PC-3 (cell line): ENCODE measurements at regions of chr5 and their contacts with region 1.

Region 1: GRCh38 chr5:159286420-159287035 is 23.4 kb downstream of the UBLCP1 start:
- DNase-seq: peak; percentile 49
- ATAC-seq: no peak
- H3K4me3 ChIP-seq: no peak overlapping the region
- H3K27ac ChIP-seq: no peak overlapping the region
- H3K4me1 ChIP-seq: 0 out of 2 replicates have a peak, but pooled peaks cover 6% of the 10 kb centered on the region
- H3K27me3 ChIP-seq: no peaks in the 10 kb centered on the region
- CTCF ChIP-seq: peak; percentile 64

Region 2: DNA sequence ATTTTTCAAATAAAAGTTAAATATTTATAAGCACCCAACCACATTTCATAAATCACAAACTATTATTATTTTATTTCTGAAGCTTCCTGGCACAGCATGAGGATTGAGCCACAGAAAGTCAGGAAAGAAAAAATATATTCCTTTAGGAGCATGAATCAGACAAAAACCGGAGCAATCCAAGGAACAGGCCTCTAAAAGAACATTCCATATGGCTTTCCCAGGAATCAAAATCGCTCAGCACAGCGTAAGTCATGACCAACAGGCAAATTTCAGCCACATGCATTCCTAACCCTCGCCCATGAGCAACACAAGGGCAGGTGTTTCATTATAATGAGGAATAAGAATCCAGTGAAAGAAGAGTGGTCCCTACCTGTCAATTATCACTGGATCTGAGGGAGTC is 213.5 kb before region 1 on chr5:
- CTCF ChIA-PET with region 1: no interaction called
- POLR2A ChIA-PET with region 1: no interaction called
- intact Hi-C with region 1: no loop called
- DNase-seq: no peak
- ATAC-seq: no peak
- H3K4me3 ChIP-seq: no peak overlapping the region
- H3K27ac ChIP-seq: no peak overlapping the region
- H3K4me1 ChIP-seq: no peaks in the 10 kb centered on the region
- H3K27me3 ChIP-seq: no peaks in the 10 kb centered on the region; the same call in 1 of the 2 replicates
- CTCF ChIP-seq: no peak

Region 3: DNA sequence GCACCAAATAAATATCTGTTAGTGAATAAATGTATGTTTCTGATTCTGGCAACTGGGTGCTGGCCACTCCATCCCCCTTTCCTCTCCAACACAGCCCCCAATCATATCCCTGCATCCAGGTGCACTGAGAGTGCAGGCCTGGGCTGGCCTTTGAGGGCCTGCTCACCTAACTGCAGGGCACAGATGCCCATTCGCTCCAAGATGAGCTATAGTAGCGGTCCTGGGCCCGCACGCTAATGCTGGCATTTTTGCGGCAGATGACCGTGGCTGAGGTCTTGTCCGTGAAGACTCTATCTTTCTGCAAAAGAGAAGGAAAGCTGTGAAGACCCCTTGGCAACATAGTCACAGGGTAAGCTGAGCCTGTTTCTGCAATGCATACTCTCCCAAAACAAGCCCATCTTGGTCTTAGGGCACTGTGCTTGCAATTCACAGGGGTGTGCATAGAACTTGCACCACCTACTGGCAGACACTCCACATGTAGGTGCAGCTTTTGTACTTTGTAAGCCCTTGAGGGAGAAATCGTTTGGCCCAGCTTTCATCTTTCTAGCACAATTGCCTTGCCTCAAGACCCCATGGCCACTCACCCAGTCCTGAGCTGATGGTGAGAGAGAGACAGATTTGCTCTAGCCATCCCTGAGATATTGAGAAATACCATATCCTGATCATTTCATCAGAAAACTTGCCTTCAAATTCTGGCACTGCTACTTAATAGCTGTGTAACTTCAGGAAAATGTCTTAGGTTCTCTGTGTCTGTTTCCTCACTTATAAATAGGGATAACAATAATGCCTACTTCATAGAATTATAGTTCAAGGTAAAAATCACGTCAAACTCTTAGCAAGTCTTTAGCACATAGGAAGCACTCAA is 30.2 kb after region 1 on chr5:
- CTCF ChIA-PET with region 1: interaction called, 17 read pairs
- POLR2A ChIA-PET with region 1: no interaction called
- intact Hi-C with region 1: loop called (anchors 1 kb)
- DNase-seq: peak; percentile 55
- ATAC-seq: peak; percentile 93
- H3K4me3 ChIP-seq: no peak overlapping the region
- H3K27ac ChIP-seq: no peak overlapping the region
- H3K4me1 ChIP-seq: peaks cover 10% of the 10 kb centered on the region
- H3K27me3 ChIP-seq: no peaks in the 10 kb centered on the region
- CTCF ChIP-seq: peak; percentile 82

Region 4: GRCh38 chr5:159331093-159331973 is 44.8 kb after region 1 on chr5:
- CTCF ChIA-PET with region 1: no interaction called
- POLR2A ChIA-PET with region 1: no interaction called
- intact Hi-C with region 1: no loop called
- DNase-seq: peak; percentile 58
- ATAC-seq: peak; percentile 87
- H3K4me3 ChIP-seq: peak overlapping the region; percentile 72
- H3K27ac ChIP-seq: 0 out of 2 replicates have a peak overlapping the region, but pooled peaks have one; percentile 19
- H3K4me1 ChIP-seq: peaks cover 3% of the 10 kb centered on the region; the same call in 1 of the 2 replicates
- H3K27me3 ChIP-seq: no peaks in the 10 kb centered on the region
- CTCF ChIP-seq: peak; percentile 65